ENCODE measurements at regions of chr15 and their contacts with region 1.

Region 1: DNA sequence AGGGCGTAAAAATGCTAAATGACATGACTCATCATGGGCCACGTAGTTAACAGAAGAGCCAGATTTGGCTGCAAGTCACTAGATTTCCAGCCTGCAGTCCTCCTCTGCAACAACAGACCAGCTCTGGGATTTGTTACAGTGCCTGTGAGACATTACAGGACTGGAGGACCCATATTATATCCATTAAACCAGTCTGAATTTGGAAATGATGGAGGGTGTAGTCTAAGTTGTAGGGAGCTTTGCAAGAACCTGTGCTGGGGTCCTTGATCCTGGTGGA is 10.8 kb downstream of the ZNF774 start:
- DNase-seq: no peak
- H3K4me3 Mint-ChIP-seq: no peak overlapping the region
- H3K27ac Mint-ChIP-seq: peak overlapping the region; percentile 13
- H3K4me1 Mint-ChIP-seq: peaks cover 34% of the 10 kb centered on the region
- H3K27me3 Mint-ChIP-seq: no peaks in the 10 kb centered on the region

Region 2: DNA sequence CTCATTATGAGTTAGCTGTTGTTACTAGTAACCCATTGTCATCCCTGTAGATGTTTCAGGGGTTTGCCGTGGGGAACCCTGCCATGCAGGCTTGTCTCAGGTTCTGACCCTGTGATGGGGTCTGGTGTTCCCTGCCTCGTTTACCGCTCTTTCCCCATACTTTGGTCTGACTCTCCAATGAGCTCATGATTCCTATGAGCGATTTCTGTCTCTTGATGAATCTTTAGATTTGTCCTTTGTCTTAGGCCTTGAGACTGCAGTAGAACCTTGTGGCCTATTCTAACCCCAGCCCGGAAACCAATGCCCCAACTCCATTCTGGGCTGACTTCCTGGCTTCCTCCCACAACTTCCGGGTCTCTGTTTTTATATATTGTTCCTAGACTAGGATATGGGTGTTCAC is 13.9 kb after region 1 on chr15:
- intact Hi-C with region 1: loop called (anchors 1 kb)
- DNase-seq: peak; percentile 91
- H3K4me3 Mint-ChIP-seq: peak overlapping the region; percentile 59
- H3K27ac Mint-ChIP-seq: peak overlapping the region; percentile 92
- H3K4me1 Mint-ChIP-seq: peaks cover 31% of the 10 kb centered on the region
- H3K27me3 Mint-ChIP-seq: no peaks in the 10 kb centered on the region

Region 3: GRCh38 chr15:90387537-90388461 is 24.9 kb after region 1 on chr15 and contains the start of gene IQGAP1:
- intact Hi-C with region 1: loop called (anchors 2 kb)
- DNase-seq: peak; percentile 99
- H3K4me3 Mint-ChIP-seq: peak within 1 kb of the TSS; percentile 88
- H3K27ac Mint-ChIP-seq: peak within 1 kb of the TSS; percentile 99
- H3K4me1 Mint-ChIP-seq: peaks cover 42% of the 10 kb centered on the region
- H3K27me3 Mint-ChIP-seq: no peaks in the 10 kb centered on the region
- total RNA-seq, gene IQGAP1: 154 and 160 TPM in 2 replicates

Region 4: GRCh38 chr15:90407871-90408317 is 45.0 kb after region 1 on chr15:
- intact Hi-C with region 1: loop called (anchors 5 kb)
- DNase-seq: peak; percentile 81
- H3K4me3 Mint-ChIP-seq: peak overlapping the region; percentile 22
- H3K27ac Mint-ChIP-seq: peak overlapping the region; percentile 80
- H3K4me1 Mint-ChIP-seq: peaks cover 60% of the 10 kb centered on the region
- H3K27me3 Mint-ChIP-seq: no peaks in the 10 kb centered on the region

Region 5: DNA sequence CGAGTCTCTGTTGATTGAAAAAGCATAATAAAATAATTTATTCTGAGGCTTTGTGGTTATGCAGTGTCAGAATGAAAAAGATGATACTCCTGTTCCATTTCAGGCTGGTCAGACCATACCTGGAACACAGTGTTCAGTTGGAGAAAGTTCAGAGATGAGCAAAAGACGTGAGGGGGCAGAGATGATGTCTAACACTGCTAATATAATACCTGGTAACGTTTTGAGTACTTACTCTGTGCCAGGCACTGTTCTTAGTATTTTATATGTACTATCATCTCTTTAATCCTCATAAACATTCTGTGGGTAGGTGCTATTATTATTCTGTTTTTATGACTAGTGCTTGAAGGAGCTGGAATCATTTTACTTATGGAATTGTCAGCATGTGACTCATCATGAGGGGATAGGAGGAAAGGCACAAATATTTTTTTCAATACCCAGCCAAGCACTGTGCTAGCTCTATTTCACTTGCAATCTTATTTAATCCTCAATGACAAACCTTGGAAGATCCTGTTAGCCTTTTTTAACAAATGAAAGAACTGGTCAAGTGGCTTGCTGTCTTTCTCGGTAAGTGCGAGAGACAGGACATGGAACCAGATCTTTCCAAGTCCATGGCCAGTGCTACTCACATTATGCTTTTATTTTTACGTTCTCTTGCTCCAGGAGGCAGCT is 57.0 kb after region 1 on chr15:
- intact Hi-C with region 1: loop called (anchors 5 kb)
- DNase-seq: peak; percentile 74
- H3K4me3 Mint-ChIP-seq: peak overlapping the region; percentile 62
- H3K27ac Mint-ChIP-seq: peak overlapping the region; percentile 88
- H3K4me1 Mint-ChIP-seq: peaks cover 52% of the 10 kb centered on the region
- H3K27me3 Mint-ChIP-seq: no peaks in the 10 kb centered on the region

Region 6: GRCh38 chr15:90482124-90483011 is 119.5 kb after region 1 on chr15:
- intact Hi-C with region 1: loop called (anchors 1 kb)
- DNase-seq: peak; percentile 84
- H3K4me3 Mint-ChIP-seq: no peak overlapping the region
- H3K27ac Mint-ChIP-seq: peak overlapping the region; percentile 13
- H3K4me1 Mint-ChIP-seq: peaks cover 33% of the 10 kb centered on the region
- H3K27me3 Mint-ChIP-seq: no peaks in the 10 kb centered on the region